ENCODE measurements at regions of chr3 and their contacts with region 1.

Region 1: GRCh38 chr3:107676469-107677309 is 153.9 kb downstream of the BBX start:
- DNase-seq: peak in 2 of 9 experiments; percentile 24 to 49
- ATAC-seq: peak; percentile 54
- H3K4me3 ChIP-seq: no peak overlapping the region
- H3K4me3 Mint-ChIP-seq: no peak overlapping the region
- H3K27ac ChIP-seq: no peak overlapping the region
- H3K27ac Mint-ChIP-seq: peak overlapping the region; percentile 58
- H3K4me1 ChIP-seq: no peaks in the 10 kb centered on the region
- H3K4me1 Mint-ChIP-seq: peaks cover 41% of the 10 kb centered on the region
- H3K27me3 ChIP-seq: no peaks in the 10 kb centered on the region
- H3K27me3 Mint-ChIP-seq: no peaks in the 10 kb centered on the region
- CTCF ChIP-seq: peak; percentile 74

Region 2: DNA sequence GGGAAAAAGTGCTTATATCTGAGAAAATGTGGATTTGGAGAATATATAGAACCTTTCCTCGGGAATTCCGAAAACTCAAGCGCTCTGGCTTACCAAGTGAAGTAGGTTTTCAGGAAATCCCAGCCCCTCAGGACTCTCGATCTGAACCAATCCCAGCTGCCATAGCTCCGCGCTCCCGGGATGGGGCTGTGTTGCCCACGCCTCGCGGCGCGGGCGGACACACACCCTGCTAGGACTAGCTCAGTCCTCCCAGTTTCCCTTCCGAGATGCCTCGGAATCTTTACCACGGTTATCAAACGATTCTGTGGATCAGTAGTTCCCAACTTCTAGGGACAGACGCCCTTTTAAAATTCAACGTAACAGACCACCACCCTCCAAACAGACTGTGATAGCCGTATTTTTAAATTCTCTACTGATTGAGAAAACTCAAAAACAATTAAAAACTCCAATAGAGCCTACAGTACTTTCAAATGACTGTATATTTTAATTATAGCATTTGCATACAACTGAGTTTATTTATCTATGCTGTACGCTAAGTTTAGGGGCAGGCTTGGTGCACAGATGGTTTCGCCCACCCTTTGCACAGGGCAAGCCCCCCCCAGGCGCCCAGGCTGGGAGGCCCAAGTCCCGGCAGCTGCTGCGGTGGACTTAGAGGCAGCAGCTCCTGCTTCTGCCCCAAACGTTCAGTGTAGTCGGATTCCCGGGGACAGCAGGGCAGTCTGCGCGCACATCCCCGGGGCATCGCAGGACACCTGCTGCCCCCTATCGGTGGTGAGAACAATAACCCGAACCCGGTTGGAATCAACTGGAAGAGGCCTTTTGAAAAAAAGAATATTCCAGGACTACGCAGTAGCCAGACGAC is 247.1 kb before region 1 on chr3:
- CTCF ChIA-PET with region 1: no interaction called
- POLR2A ChIA-PET with region 1: no interaction called
- intact Hi-C with region 1: loop called in 1 of 2 experiments (anchors 5 kb)
- DNase-seq: peak; percentile 19 to 78 (median 47)
- ATAC-seq: peak; percentile 66
- H3K4me3 ChIP-seq: peak overlapping the region; percentile 57 to 69
- H3K4me3 Mint-ChIP-seq: peak overlapping the region; percentile 89
- H3K27ac ChIP-seq: no peak overlapping the region
- H3K27ac Mint-ChIP-seq: peak overlapping the region; percentile 14
- H3K4me1 ChIP-seq: peaks cover 11% of the 10 kb centered on the region
- H3K4me1 Mint-ChIP-seq: peaks cover 19% of the 10 kb centered on the region
- H3K27me3 ChIP-seq: peaks cover 0 to 3% of the 10 kb centered on the region in 2 experiments
- H3K27me3 Mint-ChIP-seq: peaks cover 13% of the 10 kb centered on the region
- CTCF ChIP-seq: peak; percentile 77

Region 3: DNA sequence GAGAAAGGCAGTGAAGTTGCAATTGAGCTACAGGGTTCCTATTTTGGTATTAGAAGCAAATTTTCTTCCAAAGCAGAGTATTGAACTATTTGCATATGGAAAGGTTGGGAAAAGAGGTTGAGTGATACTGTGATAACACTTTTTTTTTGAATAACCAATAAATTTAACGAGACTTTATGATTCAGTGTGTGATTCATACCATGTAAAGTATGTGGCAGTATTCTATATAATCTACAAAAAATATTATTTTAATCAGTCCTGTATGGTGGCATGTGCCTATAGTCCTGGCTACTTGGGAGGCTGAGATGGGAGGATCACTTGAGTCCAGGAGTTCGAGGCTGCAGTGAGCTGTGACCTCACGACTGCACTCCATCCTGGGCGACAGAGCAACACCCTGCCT is 53.0 kb after region 1 on chr3:
- CTCF ChIA-PET with region 1: interaction called, 12 read pairs
- POLR2A ChIA-PET with region 1: no interaction called
- intact Hi-C with region 1: no loop called
- DNase-seq: no peak
- ATAC-seq: no peak
- H3K4me3 ChIP-seq: no peak overlapping the region
- H3K4me3 Mint-ChIP-seq: no peak overlapping the region
- H3K27ac ChIP-seq: no peak overlapping the region
- H3K27ac Mint-ChIP-seq: no peak overlapping the region
- H3K4me1 ChIP-seq: no peaks in the 10 kb centered on the region
- H3K4me1 Mint-ChIP-seq: peaks cover 1% of the 10 kb centered on the region
- H3K27me3 ChIP-seq: no peaks in the 10 kb centered on the region
- H3K27me3 Mint-ChIP-seq: no peaks in the 10 kb centered on the region
- CTCF ChIP-seq: no peak

Region 4: GRCh38 chr3:107753480-107753879 is 76.8 kb after region 1 on chr3:
- CTCF ChIA-PET with region 1: interaction called, 21 read pairs
- POLR2A ChIA-PET with region 1: interaction called, 4 read pairs
- intact Hi-C with region 1: no loop called
- DNase-seq: peak in 2 of 9 experiments; percentile 15 to 33
- ATAC-seq: no peak
- H3K4me3 ChIP-seq: no peak overlapping the region
- H3K4me3 Mint-ChIP-seq: no peak overlapping the region
- H3K27ac ChIP-seq: no peak overlapping the region
- H3K27ac Mint-ChIP-seq: peak overlapping the region; percentile 74
- H3K4me1 ChIP-seq: no peaks in the 10 kb centered on the region
- H3K4me1 Mint-ChIP-seq: no peaks in the 10 kb centered on the region
- H3K27me3 ChIP-seq: no peaks in the 10 kb centered on the region
- H3K27me3 Mint-ChIP-seq: no peaks in the 10 kb centered on the region
- CTCF ChIP-seq: no peak

Region 5: DNA sequence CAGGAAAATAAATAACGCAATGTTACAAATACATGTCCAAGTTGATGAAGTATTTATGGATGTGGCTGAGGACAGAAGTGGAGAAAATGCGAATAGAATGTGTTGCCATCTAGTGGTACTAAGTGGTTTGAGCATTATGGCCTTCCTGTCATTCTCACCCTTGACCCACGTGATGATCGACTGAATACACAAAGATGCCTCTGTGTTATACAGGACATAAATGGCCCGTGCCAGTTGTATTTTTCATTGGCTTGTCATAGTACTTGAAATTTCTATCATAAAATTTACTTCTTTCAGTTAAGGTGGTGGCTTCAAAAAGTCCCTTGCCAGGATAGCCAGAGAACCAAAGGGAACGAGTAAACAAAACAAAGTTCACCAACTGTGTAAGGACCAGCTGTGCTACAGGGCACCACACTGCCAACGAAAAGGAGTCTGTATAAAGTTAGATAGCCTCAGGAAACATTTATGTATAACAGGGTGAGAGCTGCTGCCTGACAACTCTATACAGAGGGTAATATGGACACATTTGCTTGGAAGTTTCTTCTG is 730.0 kb after region 1 on chr3:
- CTCF ChIA-PET with region 1: interaction called, 3 read pairs
- POLR2A ChIA-PET with region 1: no interaction called
- intact Hi-C with region 1: loop called in 1 of 2 experiments (anchors 10 kb)
- DNase-seq: peak in 3 of 9 experiments; percentile 22 to 78 (median 55)
- ATAC-seq: peak; percentile 79
- H3K4me3 ChIP-seq: no peak overlapping the region
- H3K4me3 Mint-ChIP-seq: no peak overlapping the region
- H3K27ac ChIP-seq: no peak overlapping the region
- H3K27ac Mint-ChIP-seq: no peak overlapping the region
- H3K4me1 ChIP-seq: no peaks in the 10 kb centered on the region
- H3K4me1 Mint-ChIP-seq: peaks cover 3% of the 10 kb centered on the region
- H3K27me3 ChIP-seq: no peaks in the 10 kb centered on the region
- H3K27me3 Mint-ChIP-seq: no peaks in the 10 kb centered on the region
- CTCF ChIP-seq: peak; percentile 40

Region 6: DNA sequence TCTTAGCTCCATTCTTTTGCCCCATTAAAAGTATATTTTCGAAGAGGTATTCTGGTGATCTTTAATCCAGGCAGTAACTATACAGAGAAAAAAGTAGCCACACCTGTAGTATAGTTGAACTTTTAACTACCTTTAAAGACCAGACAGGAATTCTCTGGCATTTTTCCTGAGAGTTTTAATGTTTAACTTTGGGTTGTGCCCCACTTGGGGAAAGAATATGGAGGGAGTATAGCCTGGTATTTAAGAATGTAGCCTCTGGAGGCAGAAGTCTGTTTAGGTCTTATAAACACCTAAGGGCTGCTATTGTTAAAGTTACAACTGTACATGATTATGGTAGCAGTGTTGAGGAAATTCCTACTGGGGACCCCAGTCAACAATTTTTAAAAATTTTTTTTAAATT is 1479.1 kb after region 1 on chr3:
- CTCF ChIA-PET with region 1: no interaction called
- POLR2A ChIA-PET with region 1: no interaction called
- intact Hi-C with region 1: no loop called
- DNase-seq: no peak
- ATAC-seq: no peak
- H3K4me3 ChIP-seq: no peak overlapping the region
- H3K4me3 Mint-ChIP-seq: no peak overlapping the region
- H3K27ac ChIP-seq: no peak overlapping the region
- H3K27ac Mint-ChIP-seq: no peak overlapping the region
- H3K4me1 ChIP-seq: no peaks in the 10 kb centered on the region
- H3K4me1 Mint-ChIP-seq: no peaks in the 10 kb centered on the region
- H3K27me3 ChIP-seq: peaks cover 0 to 2% of the 10 kb centered on the region in 2 experiments
- H3K27me3 Mint-ChIP-seq: peaks cover 4% of the 10 kb centered on the region
- CTCF ChIP-seq: no peak

Measured in CD8-positive, alpha-beta T cell (primary cell).